ENCODE measurements at regions of chr3 and their contacts with region 1.

Region 1: DNA sequence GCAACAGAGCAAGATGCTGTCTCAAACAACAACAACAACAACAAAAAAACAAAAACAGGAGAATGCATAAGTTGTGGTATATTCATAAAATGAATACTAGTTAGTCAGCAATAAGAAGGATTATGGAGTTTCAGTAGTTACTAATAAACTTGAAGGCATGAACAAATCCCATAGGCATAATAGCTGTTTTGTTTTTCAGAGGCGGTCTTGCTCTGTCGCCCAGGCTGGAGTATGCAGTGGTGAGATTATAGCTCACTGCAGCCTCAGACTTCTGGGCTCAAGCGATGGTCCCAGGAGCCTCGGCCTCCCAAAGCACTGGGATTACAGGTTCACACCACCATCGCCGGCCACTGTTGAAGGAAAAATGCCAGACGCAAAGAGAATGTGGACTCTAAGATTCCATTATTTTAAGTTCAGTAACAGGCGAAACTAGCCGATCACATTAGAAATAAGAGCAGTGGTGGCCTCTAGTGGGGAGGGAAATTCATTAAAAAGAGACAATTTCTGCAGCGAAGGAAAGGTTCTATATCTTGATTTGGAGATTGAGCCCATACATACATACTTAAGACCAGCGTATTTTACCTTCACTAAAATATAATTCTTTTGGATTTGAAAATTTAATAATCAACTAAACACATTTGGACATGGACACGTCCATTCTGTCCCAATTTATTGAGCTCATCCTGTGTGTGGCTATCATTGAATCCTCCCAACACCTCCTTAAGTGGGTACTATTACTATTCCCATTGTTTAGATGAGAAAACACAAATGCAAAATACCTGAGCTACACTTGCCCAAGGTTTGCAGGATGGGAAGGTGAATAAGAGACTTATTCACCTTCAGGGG is 27.4 kb upstream of the HDAC11 start:
- DNase-seq: peak; percentile 71
- ATAC-seq: no peak
- H3K4me3 Mint-ChIP-seq: peak overlapping the region; percentile 89
- H3K27ac Mint-ChIP-seq: peak overlapping the region; percentile 86
- H3K4me1 Mint-ChIP-seq: peaks cover 27% of the 10 kb centered on the region
- H3K27me3 Mint-ChIP-seq: no peaks in the 10 kb centered on the region

Region 2: DNA sequence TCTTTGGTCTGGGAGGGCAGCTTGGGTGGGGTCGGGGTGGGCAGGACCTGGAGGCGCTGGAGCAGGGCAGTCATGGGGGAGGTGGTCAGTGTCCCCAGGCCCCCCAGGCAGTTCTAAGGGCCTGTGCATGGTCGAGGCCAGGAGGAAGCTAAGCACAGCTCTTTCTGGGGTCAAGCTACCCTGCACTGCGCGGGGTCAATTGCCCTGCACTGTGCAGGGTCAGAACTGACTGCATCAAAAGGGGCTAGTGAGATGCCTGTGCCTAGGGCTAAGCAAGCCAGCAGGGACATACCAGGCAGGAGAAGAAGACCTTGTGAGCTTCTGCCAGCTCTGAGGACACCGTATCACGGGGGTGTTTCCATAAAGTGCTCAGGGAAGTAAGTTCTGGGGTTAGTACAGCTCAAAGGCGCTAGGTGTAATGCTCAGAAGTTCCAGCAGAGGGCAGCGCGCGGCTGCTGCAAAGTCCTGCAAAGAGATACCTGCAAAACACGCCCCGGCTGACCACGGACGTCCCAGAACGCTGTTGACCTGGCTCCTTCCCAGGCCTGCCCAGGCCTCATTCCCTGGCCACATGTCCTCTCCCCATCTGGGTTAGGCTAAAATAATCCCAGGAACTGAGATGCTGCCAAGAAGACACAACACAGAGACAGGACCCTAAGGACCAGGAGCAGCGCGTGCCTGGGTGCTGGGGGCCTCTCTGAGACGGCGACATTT is 360.7 kb before region 1 on chr3:
- CTCF ChIA-PET with region 1: interaction called, 49 read pairs
- POLR2A ChIA-PET with region 1: no interaction called
- DNase-seq: peak; percentile 88
- ATAC-seq: peak; percentile 91
- H3K4me3 Mint-ChIP-seq: no peak overlapping the region
- H3K27ac Mint-ChIP-seq: peak overlapping the region; percentile 51
- H3K4me1 Mint-ChIP-seq: peaks cover 21% of the 10 kb centered on the region
- H3K27me3 Mint-ChIP-seq: peaks cover 21% of the 10 kb centered on the region

Region 3: GRCh38 chr3:13307041-13307440 is 145.7 kb before region 1 on chr3:
- CTCF ChIA-PET with region 1: interaction called, 11 read pairs
- POLR2A ChIA-PET with region 1: no interaction called
- DNase-seq: no peak
- ATAC-seq: no peak
- H3K4me3 Mint-ChIP-seq: no peak overlapping the region
- H3K27ac Mint-ChIP-seq: no peak overlapping the region
- H3K4me1 Mint-ChIP-seq: no peaks in the 10 kb centered on the region
- H3K27me3 Mint-ChIP-seq: no peaks in the 10 kb centered on the region

Region 4: GRCh38 chr3:13379201-13379830 is 73.4 kb before region 1 on chr3:
- CTCF ChIA-PET with region 1: interaction called, 18 read pairs
- POLR2A ChIA-PET with region 1: no interaction called
- DNase-seq: no peak
- ATAC-seq: no peak
- H3K4me3 Mint-ChIP-seq: no peak overlapping the region
- H3K27ac Mint-ChIP-seq: no peak overlapping the region
- H3K4me1 Mint-ChIP-seq: no peaks in the 10 kb centered on the region
- H3K27me3 Mint-ChIP-seq: no peaks in the 10 kb centered on the region

Region 5: DNA sequence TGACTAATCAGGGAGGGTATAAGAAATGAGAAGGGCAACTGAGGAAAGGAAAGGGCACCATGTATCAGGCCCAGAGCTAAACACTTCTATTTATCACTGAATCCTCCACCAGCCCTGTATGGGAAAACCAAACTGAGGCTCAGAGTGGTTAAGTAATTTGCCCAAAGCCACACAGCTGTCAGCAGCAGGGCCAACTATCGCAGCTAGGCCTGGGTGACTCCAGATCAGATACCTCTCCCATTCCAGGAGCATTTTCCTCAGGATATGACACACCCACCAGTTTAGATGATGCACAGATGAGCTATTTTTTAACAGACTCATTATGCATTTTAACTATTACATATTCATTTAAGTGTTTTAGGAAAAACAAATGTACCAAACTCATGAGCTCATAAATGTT is 47.1 kb before region 1 on chr3:
- CTCF ChIA-PET with region 1: interaction called, 15 read pairs
- POLR2A ChIA-PET with region 1: interaction called, 4 read pairs
- DNase-seq: no peak
- ATAC-seq: no peak
- H3K4me3 Mint-ChIP-seq: no peak overlapping the region
- H3K27ac Mint-ChIP-seq: no peak overlapping the region
- H3K4me1 Mint-ChIP-seq: peaks cover 28% of the 10 kb centered on the region
- H3K27me3 Mint-ChIP-seq: no peaks in the 10 kb centered on the region

Region 6: DNA sequence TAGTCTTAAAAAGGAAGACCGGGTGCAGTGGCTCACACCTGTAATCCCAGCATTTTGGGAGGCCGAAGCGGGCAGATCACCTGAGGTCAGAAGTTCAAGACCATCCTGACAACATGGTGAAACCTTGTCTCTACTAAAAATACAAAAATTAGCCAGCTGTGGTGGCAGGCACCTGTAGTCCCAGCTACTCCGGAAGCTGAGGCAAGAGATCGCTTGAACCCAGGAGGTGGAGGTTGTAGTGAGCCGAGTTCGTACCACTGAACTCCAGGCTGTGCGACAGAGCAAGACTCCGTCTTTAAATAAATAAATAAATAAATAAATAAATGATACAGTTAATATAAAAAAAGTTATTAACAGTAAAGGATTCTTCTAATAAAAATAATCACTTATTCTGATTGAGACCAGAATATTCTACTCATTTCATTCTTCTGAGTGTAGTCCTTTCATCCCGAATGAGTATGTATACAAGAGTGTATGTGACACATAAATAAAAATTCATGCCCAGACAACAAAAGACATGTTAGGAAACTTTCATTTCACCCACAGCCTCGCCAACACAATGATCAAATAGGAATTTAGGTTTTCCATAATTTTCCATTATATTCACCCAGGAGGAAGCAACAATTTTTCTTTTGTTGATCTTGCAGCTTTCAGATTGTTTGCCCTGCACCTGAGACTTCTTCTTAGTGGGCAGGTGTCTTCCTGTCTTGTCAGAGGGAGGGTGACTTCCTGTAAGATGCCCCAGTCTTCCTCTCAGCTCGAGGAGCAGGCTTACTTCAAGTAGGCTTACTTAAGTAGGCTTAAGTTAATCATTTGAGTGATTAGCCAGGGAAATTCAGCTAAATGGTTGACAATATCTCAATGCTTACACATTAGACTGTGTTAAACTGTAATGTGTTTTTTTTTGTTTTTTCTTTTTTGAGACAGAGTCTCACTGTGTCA is 24.8 kb before region 1 on chr3:
- CTCF ChIA-PET with region 1: interaction called, 46 read pairs
- POLR2A ChIA-PET with region 1: interaction called, 8 read pairs
- DNase-seq: peak; percentile 60
- ATAC-seq: peak; percentile 91
- H3K4me3 Mint-ChIP-seq: peak overlapping the region; percentile 6
- H3K27ac Mint-ChIP-seq: peak overlapping the region; percentile 84
- H3K4me1 Mint-ChIP-seq: peaks cover 43% of the 10 kb centered on the region
- H3K27me3 Mint-ChIP-seq: no peaks in the 10 kb centered on the region